ENCODE measurements at regions of chr7 and their contacts with region 1.

Region 1: GRCh38 chr7:155477476-155477875 is 19.5 kb downstream of the EN2 start:
- DNase-seq: no peak
- H3K4me3 Mint-ChIP-seq: no peak overlapping the region
- H3K27ac Mint-ChIP-seq: peak overlapping the region; percentile 47
- H3K4me1 Mint-ChIP-seq: peaks cover 13% of the 10 kb centered on the region
- H3K27me3 Mint-ChIP-seq: peaks cover 63% of the 10 kb centered on the region

Region 2: GRCh38 chr7:155497149-155497901 is 19.8 kb after region 1 on chr7:
- intact Hi-C with region 1: loop called (anchors 1 kb)
- DNase-seq: no peak
- H3K4me3 Mint-ChIP-seq: no peak overlapping the region
- H3K27ac Mint-ChIP-seq: no peak overlapping the region
- H3K4me1 Mint-ChIP-seq: no peaks in the 10 kb centered on the region
- H3K27me3 Mint-ChIP-seq: peaks cover 44% of the 10 kb centered on the region

Region 3: DNA sequence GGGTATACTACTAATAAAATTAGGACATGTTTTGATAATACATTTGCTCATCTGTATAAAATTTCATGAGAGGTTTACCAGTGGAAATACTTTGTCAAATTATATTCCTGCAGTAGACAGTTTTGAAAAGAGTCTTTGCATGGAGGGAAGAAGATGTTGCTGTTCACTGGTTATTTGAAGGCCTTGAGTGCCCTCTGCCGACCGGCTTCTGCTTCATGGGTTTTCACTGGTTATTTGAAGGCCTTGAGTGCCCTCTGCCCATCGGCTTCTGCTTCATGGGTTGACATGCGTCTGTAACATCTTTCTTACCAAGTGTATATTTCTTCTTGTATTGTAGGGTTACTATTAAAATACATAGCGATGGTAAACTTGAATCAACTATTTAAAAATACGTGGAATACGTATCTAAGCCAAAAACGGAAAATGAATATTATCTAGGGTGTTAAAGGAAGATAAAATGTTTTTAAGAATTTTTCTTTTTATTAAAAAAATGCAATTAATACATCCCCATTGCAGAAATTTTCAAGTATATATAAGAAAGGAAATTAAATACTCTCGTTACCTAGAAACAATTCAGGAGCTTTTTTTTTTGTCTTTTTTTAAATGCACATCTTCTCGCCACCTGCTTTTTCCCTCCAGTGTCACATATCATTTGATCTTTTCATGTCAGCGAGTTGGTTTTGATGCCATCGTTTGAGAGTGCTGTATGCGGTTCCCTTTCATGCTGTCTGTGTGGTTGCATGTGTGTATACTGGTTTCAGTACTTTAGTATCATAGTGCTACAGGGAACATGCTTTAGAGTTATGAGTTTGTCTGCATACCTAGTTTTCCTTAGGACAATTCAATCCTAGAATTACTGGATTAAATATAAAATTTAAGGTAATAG is 261.4 kb after region 1 on chr7:
- intact Hi-C with region 1: loop called (anchors 10 kb)
- DNase-seq: peak; percentile 46
- H3K4me3 Mint-ChIP-seq: peak overlapping the region; percentile 51
- H3K27ac Mint-ChIP-seq: peak overlapping the region; percentile 78
- H3K4me1 Mint-ChIP-seq: peaks cover 74% of the 10 kb centered on the region
- H3K27me3 Mint-ChIP-seq: no peaks in the 10 kb centered on the region